Mucosa of descending colon (tissue), 3 donors: ENCODE measurements at regions of chr1 and their contacts with region 1.

Region 1: DNA sequence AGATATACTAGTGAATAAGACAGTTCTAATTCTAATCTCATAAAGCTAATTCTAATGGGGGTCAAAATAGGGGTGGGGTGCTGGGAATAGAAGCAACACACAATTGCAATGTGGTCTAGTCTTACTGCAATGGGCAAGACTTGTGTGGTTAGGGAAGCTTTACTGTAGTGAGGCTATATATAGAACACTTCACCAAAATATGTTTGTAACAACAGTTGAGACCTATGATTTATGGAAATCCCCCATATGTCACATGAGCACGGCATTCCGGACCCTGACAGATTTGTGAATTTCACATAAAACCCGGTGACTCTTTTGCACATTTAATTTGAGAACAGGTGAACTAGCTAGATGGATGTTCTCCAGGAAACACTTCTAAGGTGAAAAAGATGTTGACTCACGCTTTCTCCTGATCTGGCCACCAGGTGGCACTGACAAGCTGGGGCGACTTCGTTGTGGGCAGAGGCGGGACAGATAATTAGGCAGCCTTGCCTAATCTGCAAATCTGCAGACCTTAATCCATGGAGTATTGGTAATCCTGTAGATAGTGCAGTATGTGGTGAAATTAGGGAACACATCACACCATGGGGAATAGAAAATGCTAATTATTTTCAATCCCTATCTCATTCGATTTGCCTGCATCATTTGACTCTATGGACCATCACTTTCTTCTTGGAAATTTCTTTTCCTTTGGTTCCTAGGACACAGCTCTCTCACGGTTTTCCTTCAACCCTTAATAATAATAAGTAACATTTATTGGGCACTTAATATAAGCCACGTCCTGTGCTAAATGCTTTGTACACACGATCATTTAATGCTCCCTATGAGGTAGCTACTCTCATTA is 37.7 kb downstream of the KIAA0040 start:
- DNase-seq: peak; percentile 59 to 83 (median 82)
- ATAC-seq: peak; percentile 78
- H3K4me3 ChIP-seq: no peak overlapping the region
- H3K4me1 ChIP-seq: no peaks in the 10 kb centered on the region
- CTCF ChIP-seq: peak; percentile 62

Region 2: GRCh38 chr1:175221666-175222175 is 66.9 kb after region 1 on chr1:
- intact Hi-C with region 1: loop called in 1 of 2 experiments (anchors 5 kb)
- DNase-seq: peak in 2 of 3 donors; percentile 51 to 60
- ATAC-seq: peak; percentile 56
- H3K4me3 ChIP-seq: no peak overlapping the region
- H3K4me1 ChIP-seq: peaks cover 17% of the 10 kb centered on the region
- CTCF ChIP-seq: no peak

Region 3: DNA sequence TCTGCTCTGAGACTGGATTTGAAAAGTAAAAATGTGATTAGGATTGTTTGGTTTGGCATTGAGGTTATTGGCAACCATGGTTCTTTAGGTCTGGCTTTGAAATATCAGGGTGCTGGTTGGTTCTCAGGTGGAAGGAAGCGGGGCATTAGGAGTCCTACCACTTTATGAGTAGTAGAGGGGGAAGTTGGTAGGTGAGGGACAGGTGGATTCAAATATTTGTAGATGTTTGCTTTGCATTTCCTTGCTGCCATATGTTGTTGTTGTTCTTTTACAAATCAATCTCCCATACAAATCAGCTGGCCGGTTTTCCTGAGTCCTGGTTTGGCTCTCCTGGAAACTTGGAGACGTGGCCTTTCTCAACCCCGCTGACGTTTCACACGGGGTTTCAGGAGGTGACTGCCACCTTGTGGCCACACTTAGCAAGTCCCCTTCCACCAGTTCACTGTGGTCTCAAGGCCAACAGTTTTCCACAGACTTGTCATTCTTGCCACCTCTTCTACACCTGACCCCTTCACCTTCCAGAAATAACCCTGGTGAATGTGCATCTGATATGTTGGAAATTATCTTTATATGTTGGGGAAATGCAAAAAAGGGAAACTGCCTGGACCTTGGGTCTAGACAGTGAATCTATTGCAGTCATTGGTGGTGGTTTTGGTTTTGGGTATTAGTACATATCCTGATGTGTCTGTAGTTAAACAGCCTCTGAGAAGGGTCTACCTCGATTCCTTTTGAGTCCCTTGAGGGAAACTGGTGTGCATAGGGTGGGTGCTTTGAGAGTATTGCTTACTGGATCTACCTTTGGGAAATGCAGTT is 164.8 kb after region 1 on chr1:
- intact Hi-C with region 1: loop called (anchors 2 to 5 kb)
- DNase-seq: peak; percentile 64 to 82 (median 73)
- ATAC-seq: peak; percentile 93
- H3K4me3 ChIP-seq: no peak overlapping the region
- H3K4me1 ChIP-seq: no peaks in the 10 kb centered on the region
- CTCF ChIP-seq: peak; percentile 59